ENCODE measurements at regions of chr16 and their contacts with region 1.

Region 1: GRCh38 chr16:35425270-35425669 is 1965.9 kb downstream of the TP53TG3F start:
- DNase-seq: peak in 1 of 3 donors; percentile 45
- ATAC-seq: no peak
- H3K4me3 ChIP-seq: no peak overlapping the region
- H3K27ac ChIP-seq: no peak overlapping the region
- H3K4me1 ChIP-seq: no peaks in the 10 kb centered on the region
- H3K27me3 ChIP-seq: no peaks in the 10 kb centered on the region
- CTCF ChIP-seq: no peak
- POLR2A ChIP-seq: no peak

Region 2: GRCh38 chr16:35365675-35366074 is 59.6 kb before region 1 on chr16:
- intact Hi-C with region 1: loop called in 1 of 2 experiments (anchors 10 kb)
- DNase-seq: peak in 1 of 3 donors; percentile 57
- ATAC-seq: peak in 3 of 4 donors; percentile 26 to 69 (median 48)
- H3K4me3 ChIP-seq: no peak overlapping the region
- H3K27ac ChIP-seq: no peak overlapping the region
- H3K4me1 ChIP-seq: no peaks in the 10 kb centered on the region
- H3K27me3 ChIP-seq: no peaks in the 10 kb centered on the region
- CTCF ChIP-seq: no peak
- POLR2A ChIP-seq: no peak